CD8-positive, alpha-beta memory T cell (primary cell): ENCODE measurements at regions of chr2 and their contacts with region 1.

Region 1: DNA sequence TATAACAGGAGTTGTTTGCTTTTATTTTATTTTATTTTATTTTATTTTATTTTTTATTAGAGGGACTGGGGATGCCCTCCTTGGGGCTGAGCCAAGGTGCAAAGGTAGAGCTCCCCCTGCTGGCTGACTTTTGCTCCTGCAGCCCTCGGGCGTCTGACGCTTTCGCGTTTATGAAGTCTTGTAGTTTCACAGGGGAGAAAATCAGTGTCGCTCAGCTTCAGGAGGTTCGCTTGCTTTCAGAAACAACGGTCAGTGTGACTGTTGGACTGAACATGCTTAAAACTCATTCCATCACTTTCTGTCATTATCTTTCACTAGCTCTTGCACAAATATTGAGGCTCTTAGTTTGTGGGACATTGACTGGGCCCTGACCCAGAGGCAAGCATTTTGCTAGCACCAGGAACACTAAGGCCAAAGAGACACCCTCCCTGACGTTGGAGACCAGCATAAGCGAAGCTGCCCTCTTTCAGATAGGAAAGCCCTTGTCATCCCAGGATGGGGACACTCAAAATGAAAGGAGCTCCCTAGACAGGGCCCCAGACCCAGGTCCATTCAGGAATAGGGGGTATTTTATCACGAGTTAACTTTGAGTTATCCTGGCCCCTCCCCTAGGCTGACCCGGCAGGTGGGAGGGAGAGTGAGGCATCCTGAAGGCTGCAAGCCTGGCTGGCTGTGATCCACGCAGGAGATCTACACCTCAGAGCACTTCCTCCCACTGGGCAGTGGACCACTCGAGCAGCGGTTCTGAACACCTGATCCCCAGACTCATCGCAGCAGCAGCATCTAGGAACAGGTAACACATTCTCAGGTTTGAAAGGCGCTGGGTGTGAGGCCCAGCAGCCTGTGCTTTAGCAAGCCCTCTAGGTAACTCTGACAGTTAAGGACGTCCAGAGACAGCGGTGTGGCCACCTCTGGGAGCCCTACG is 34.4 kb downstream of the LGALSL start:
- DNase-seq: peak; percentile 47 to 80 (median 64)
- H3K4me3 ChIP-seq: no peak overlapping the region
- H3K4me3 Mint-ChIP-seq: no peak overlapping the region
- H3K27ac ChIP-seq: no peak overlapping the region
- H3K27ac Mint-ChIP-seq: peak overlapping the region in 1 of 8 donors; percentile 45
- H3K4me1 ChIP-seq: peaks cover 4% of the 10 kb centered on the region
- H3K4me1 Mint-ChIP-seq: peaks cover 2 to 16% (median 11%) of the 10 kb centered on the region in 3 donors
- H3K27me3 ChIP-seq: no peaks in the 10 kb centered on the region
- H3K27me3 Mint-ChIP-seq: peaks cover 3 to 24% of the 10 kb centered on the region in 2 donors

Region 2: GRCh38 chr2:64052468-64053241 is 435.7 kb before region 1 on chr2:
- CTCF ChIA-PET with region 1: interaction called, 24 read pairs
- POLR2A ChIA-PET with region 1: no interaction called
- DNase-seq: peak in 1 of 5 donors; percentile 29
- H3K4me3 ChIP-seq: no peak overlapping the region
- H3K4me3 Mint-ChIP-seq: no peak overlapping the region
- H3K27ac ChIP-seq: no peak overlapping the region
- H3K27ac Mint-ChIP-seq: peak overlapping the region in 1 of 8 donors; percentile 61
- H3K4me1 ChIP-seq: peaks cover 34% of the 10 kb centered on the region
- H3K4me1 Mint-ChIP-seq: peaks cover 10 to 13% (median 11%) of the 10 kb centered on the region in 3 donors
- H3K27me3 ChIP-seq: no peaks in the 10 kb centered on the region
- H3K27me3 Mint-ChIP-seq: no peaks in the 10 kb centered on the region

Region 3: GRCh38 chr2:64500549-64500948 is 12.2 kb after region 1 on chr2:
- CTCF ChIA-PET with region 1: interaction called, 15 read pairs
- POLR2A ChIA-PET with region 1: no interaction called
- DNase-seq: no peak
- H3K4me3 ChIP-seq: no peak overlapping the region
- H3K4me3 Mint-ChIP-seq: no peak overlapping the region
- H3K27ac ChIP-seq: no peak overlapping the region
- H3K27ac Mint-ChIP-seq: no peak overlapping the region
- H3K4me1 ChIP-seq: no peaks in the 10 kb centered on the region
- H3K4me1 Mint-ChIP-seq: no peaks in the 10 kb centered on the region
- H3K27me3 ChIP-seq: no peaks in the 10 kb centered on the region
- H3K27me3 Mint-ChIP-seq: peaks cover 13 to 44% of the 10 kb centered on the region in 2 donors

Region 4: GRCh38 chr2:64586883-64587481 is 98.7 kb after region 1 on chr2:
- CTCF ChIA-PET with region 1: no interaction called
- POLR2A ChIA-PET with region 1: no interaction called
- DNase-seq: peak in 2 of 5 donors; percentile 23 to 36
- H3K4me3 ChIP-seq: no peak overlapping the region
- H3K4me3 Mint-ChIP-seq: no peak overlapping the region
- H3K27ac ChIP-seq: no peak overlapping the region
- H3K27ac Mint-ChIP-seq: peak overlapping the region in 2 of 8 donors; percentile 2 to 3
- H3K4me1 ChIP-seq: no peaks in the 10 kb centered on the region
- H3K4me1 Mint-ChIP-seq: peaks cover 0 to 4% (median 0%) of the 10 kb centered on the region in 3 donors
- H3K27me3 ChIP-seq: no peaks in the 10 kb centered on the region
- H3K27me3 Mint-ChIP-seq: no peaks in the 10 kb centered on the region

Region 5: DNA sequence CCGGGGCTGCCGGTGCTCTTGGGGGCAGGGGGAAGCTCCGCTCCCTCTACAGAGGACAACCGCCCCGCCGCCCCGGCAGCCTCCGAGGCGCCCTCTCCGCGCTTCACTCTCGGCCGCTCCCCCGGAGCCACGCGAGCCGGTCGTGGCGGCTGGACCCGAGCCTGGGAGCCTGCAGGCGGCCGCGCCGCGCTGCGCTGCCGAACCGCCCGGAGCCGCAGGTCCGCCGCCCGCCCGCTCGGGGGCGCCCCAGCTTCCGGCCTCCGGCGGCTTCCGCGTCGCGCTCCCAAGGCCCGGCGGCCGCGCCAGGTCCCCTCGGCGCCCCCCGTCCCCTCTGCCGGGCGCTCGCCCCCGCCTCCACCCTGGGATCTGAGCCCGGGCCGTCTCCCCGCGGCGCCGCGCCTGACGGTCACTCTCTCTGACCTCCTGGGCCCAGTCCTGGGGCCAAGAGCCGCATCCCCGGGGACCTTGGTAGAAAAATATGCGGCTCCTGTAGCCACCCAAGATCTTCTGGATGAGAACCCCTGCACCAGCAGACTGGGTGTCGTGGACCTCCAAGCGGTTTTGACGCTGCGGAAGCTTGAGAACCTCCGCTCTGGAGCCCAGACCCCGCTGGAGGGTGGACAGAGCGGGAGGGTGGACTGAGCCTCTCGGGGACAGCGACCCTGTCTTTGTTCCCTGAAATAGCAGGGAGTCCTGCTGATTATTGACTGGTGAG is 121.1 kb after region 1 on chr2:
- CTCF ChIA-PET with region 1: no interaction called
- POLR2A ChIA-PET with region 1: no interaction called
- DNase-seq: peak; percentile 58 to 76 (median 73)
- H3K4me3 ChIP-seq: peak overlapping the region; percentile 76
- H3K4me3 Mint-ChIP-seq: peak overlapping the region; percentile 68 to 91 (median 77)
- H3K27ac ChIP-seq: peak overlapping the region; percentile 75
- H3K27ac Mint-ChIP-seq: peak overlapping the region in 7 of 8 donors; percentile 30 to 90 (median 68)
- H3K4me1 ChIP-seq: peaks cover 28% of the 10 kb centered on the region
- H3K4me1 Mint-ChIP-seq: peaks cover 20 to 40% (median 29%) of the 10 kb centered on the region in 3 donors
- H3K27me3 ChIP-seq: no peaks in the 10 kb centered on the region
- H3K27me3 Mint-ChIP-seq: no peaks in the 10 kb centered on the region